Left lung (tissue), 14 donors: ENCODE measurements at regions of chr9 and their contacts with region 1.

Region 1: DNA sequence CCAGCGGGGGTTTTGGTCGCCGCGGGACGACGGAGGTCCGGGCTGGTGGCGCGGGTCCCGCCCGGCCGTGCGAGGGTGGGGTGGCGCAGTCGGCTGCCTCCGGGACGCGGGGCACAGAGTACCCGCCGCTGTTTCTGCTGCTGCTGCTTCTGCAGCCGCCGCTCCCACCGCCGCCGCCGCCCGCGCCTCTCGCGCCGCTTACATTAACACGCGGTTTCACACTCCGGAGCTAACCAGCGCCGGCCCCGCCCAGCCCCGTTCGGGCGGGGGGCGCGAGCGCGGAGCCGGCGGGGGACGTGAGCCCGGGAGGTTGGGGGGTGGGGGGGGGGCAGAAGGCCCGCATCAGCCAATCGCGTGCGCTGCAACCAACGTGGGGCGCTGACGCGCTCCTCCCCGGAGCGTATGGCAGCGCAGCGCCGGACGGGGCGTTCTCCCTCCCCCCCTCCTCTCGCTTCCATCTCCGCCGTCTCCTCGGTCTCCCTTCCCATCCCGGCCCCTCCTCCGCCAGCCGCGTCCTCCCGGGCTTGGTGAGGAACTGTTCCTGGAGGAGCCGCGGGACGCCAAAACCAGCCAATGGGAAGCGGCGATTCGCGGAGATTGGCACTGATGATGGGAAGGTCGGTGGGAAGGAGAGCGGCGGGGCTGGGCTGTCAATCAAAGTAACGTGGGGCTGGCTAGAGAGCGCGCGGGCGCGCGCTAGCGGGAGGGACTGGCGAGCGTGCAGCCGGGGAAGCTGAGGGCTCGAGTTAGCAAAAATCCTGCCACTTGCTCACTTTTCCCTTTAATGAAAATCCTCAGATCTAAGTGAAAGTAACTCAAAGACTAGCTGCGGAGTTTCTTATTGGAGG is at the start of gene TLE1:
- DNase-seq: peak; percentile 99 to 100 (median 100)
- ATAC-seq: peak; percentile 90
- H3K4me3 ChIP-seq: peak within 1 kb of the TSS; percentile 76 to 78
- H3K27ac ChIP-seq: peak within 1 kb of the TSS; percentile 82 to 88
- H3K4me1 ChIP-seq: peaks cover 0 to 37% of the 10 kb centered on the region in 2 donors
- H3K27me3 ChIP-seq: peaks cover 0 to 36% of the 10 kb centered on the region in 2 donors
- CTCF ChIP-seq: no peak
- polyA plus RNA-seq, gene TLE1: 39.1 to 44.3 (median 41.7) TPM

Region 2: GRCh38 chr9:81529556-81530195 is 159.9 kb before region 1 on chr9:
- intact Hi-C with region 1: loop called in 1 of 2 experiments (anchors 10 kb)
- DNase-seq: no peak
- ATAC-seq: peak; percentile 50
- H3K4me3 ChIP-seq: no peak overlapping the region
- H3K27ac ChIP-seq: no peak overlapping the region
- H3K4me1 ChIP-seq: no peaks in the 10 kb centered on the region
- H3K27me3 ChIP-seq: no peaks in the 10 kb centered on the region
- CTCF ChIP-seq: no peak

Region 3: GRCh38 chr9:81601639-81602628 is 87.6 kb before region 1 on chr9:
- intact Hi-C with region 1: no loop called
- DNase-seq: no peak
- ATAC-seq: no peak
- H3K4me3 ChIP-seq: no peak overlapping the region
- H3K27ac ChIP-seq: peak overlapping the region in 1 of 2 donors; percentile 57
- H3K4me1 ChIP-seq: peaks cover 4% of the 10 kb centered on the region in 2 donors
- H3K27me3 ChIP-seq: no peaks in the 10 kb centered on the region
- CTCF ChIP-seq: no peak

Region 4: DNA sequence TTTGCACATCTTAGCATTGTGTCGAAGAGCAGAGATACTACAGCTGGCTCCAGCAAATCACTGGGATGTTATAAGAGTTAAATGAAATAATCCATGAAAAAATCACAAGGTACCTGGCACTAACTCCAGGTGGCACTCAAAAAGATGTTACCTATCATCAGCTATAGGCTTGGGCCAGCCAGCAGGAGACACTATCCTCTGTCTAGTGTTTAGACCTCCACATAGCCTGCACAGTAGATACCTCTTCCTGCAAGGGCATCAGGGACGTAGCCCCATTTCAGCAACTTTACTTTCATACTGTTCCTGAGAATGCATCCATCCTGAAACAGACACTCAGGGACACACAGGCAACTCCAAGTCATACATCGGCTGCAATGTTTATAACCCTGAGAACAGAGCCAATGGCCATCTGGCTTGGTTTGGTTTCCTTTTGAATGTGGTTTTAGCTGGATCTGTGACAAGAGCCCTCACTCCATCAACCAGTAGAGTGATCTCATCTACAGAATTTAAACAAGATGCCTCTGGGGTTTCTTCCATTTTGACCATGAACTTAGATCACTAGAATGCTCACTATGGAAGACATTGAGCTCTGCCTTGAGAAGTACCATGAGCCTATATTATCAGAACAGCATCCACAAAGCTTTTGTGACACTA is 70.1 kb before region 1 on chr9:
- intact Hi-C with region 1: loop called in 1 of 2 experiments (anchors 10 kb)
- DNase-seq: no peak
- ATAC-seq: no peak
- H3K4me3 ChIP-seq: no peak overlapping the region
- H3K27ac ChIP-seq: peak overlapping the region in 1 of 2 donors; percentile 11
- H3K4me1 ChIP-seq: peaks cover 0 to 12% of the 10 kb centered on the region in 2 donors
- H3K27me3 ChIP-seq: no peaks in the 10 kb centered on the region
- CTCF ChIP-seq: no peak